Calu3 (cell line): ENCODE measurements at regions of chr14 and their contacts with region 1.

Region 1: GRCh38 chr14:63388763-63389431 is 70.2 kb upstream of the GPHB5 start:
- DNase-seq: peak; percentile 68
- H3K4me3 Mint-ChIP-seq: no peak overlapping the region
- H3K27ac Mint-ChIP-seq: no peak overlapping the region
- H3K4me1 Mint-ChIP-seq: no peaks in the 10 kb centered on the region
- H3K27me3 Mint-ChIP-seq: no peaks in the 10 kb centered on the region
- CTCF ChIP-seq: peak; percentile 45

Region 2: GRCh38 chr14:63513756-63514155 is 124.9 kb after region 1 on chr14:
- CTCF ChIA-PET with region 1: no interaction called
- intact Hi-C with region 1: no loop called
- DNase-seq: no peak
- H3K4me3 Mint-ChIP-seq: no peak overlapping the region
- H3K27ac Mint-ChIP-seq: no peak overlapping the region
- H3K4me1 Mint-ChIP-seq: peaks cover 15% of the 10 kb centered on the region
- H3K27me3 Mint-ChIP-seq: no peaks in the 10 kb centered on the region
- CTCF ChIP-seq: no peak

Region 3: GRCh38 chr14:63632932-63633514 is 244.1 kb after region 1 on chr14:
- CTCF ChIA-PET with region 1: no interaction called
- intact Hi-C with region 1: loop called (anchors 2 kb)
- DNase-seq: no peak
- H3K4me3 Mint-ChIP-seq: no peak overlapping the region
- H3K27ac Mint-ChIP-seq: no peak overlapping the region
- H3K4me1 Mint-ChIP-seq: no peaks in the 10 kb centered on the region
- H3K27me3 Mint-ChIP-seq: no peaks in the 10 kb centered on the region
- CTCF ChIP-seq: peak; percentile 24